OCI-LY7 (cell line): ENCODE measurements at regions of chr1 and their contacts with region 1.

Region 1: GRCh38 chr1:121519042-121519755 is 334.4 kb downstream of the SRGAP2C start:
- DNase-seq: peak; percentile 94
- H3K4me3 ChIP-seq: peak overlapping the region; percentile 71
- H3K27ac ChIP-seq: peak overlapping the region; percentile 87
- H3K4me1 ChIP-seq: peaks cover 35% of the 10 kb centered on the region
- CTCF ChIP-seq: peak; percentile 35; the same call in 1 of the 2 replicates

Region 2: GRCh38 chr1:121558514-121558913 is 39.3 kb after region 1 on chr1:
- CTCF ChIA-PET with region 1: no interaction called
- POLR2A ChIA-PET with region 1: interaction called, 21 read pairs
- intact Hi-C with region 1: loop called (anchors 5 kb)
- DNase-seq: no peak
- H3K4me3 ChIP-seq: no peak overlapping the region
- H3K27ac ChIP-seq: no peak overlapping the region
- H3K4me1 ChIP-seq: peaks cover 2% of the 10 kb centered on the region
- CTCF ChIP-seq: no peak